Caco-2 (cell line): ENCODE measurements at regions of chr2 and their contacts with region 1.

Region 1: DNA sequence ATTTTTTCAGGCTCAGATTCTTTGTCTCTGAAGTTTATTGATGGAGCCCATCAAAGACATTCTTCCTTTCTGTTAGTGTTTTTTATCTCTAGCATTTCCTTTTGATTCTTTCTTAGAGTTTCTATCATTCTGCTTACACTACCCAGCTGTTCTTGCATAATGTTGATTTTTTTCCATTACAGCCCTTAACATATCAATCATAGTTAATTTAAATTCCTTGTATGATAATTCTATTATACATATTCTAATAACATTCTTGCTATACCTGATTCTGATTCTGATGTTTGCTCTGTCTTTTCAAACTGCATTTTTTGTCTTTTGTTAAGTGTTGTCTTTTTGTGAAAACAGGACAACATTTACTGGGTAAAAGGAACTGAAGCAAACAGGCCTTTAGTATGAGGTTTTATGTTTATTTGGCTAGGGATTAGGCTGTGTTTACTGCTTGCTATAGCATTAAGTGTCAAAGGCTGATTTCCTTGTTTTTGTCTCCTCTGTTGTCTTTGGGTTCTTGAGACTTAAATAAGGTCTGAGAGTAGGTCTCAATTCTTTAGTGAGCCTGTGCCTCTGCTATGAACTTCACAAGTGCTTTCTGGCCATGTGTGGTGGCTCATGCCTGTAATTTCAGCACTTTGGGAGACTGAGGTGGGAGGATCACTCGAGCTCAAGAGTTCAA is 8.0 kb upstream of the STAM2 start:
- DNase-seq: peak in 1 of 2 experiments; percentile 54
- H3K4me3 ChIP-seq: no peak overlapping the region
- H3K4me3 Mint-ChIP-seq: peak overlapping the region; percentile 22
- H3K27ac Mint-ChIP-seq: peak overlapping the region; percentile 84
- H3K4me1 ChIP-seq: peaks cover 18% of the 10 kb centered on the region
- H3K4me1 Mint-ChIP-seq: peaks cover 15% of the 10 kb centered on the region
- H3K27me3 ChIP-seq: no peaks in the 10 kb centered on the region
- H3K27me3 Mint-ChIP-seq: no peaks in the 10 kb centered on the region
- CTCF ChIP-seq: no peak

Region 2: GRCh38 chr2:152200562-152201465 is 17.3 kb after region 1 on chr2:
- CTCF ChIA-PET with region 1: no interaction called
- POLR2A ChIA-PET with region 1: no interaction called
- intact Hi-C with region 1: loop called (anchors 1 kb)
- DNase-seq: peak; percentile 68 to 88
- H3K4me3 ChIP-seq: no peak overlapping the region
- H3K4me3 Mint-ChIP-seq: peak overlapping the region; percentile 45
- H3K27ac Mint-ChIP-seq: peak overlapping the region; percentile 66
- H3K4me1 ChIP-seq: peaks cover 20% of the 10 kb centered on the region; the same call in 1 of the 2 replicates
- H3K4me1 Mint-ChIP-seq: peaks cover 31% of the 10 kb centered on the region
- H3K27me3 ChIP-seq: no peaks in the 10 kb centered on the region
- H3K27me3 Mint-ChIP-seq: no peaks in the 10 kb centered on the region
- CTCF ChIP-seq: no peak

Region 3: DNA sequence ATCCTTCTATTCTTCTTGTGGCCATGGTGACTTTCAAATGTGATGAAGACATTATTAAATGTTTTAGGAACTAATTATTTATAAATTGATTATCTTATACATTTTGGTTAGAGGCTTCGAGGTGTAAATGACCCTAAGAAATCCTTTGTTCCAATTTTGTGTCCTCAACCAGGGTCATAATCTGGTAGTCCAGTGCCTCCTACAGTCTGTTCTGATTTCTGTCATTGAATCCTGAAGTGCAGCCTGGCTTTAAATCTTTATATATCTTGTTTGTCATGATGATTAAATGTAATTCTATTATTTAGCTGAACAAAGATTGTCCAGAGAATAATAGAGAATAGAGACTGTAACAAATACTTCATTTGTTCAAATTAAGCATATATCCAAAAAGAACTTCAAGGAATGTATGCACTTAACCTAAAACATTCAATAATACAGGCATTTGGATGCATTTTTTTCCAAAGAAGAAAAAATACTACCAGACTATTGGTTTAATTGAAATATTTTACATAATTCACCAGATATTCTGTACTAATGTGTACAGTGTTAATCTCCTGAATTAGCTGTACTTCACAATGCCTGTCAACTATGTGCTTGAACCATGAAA is 443.9 kb after region 1 on chr2:
- CTCF ChIA-PET with region 1: interaction called, 10 read pairs
- POLR2A ChIA-PET with region 1: no interaction called
- intact Hi-C with region 1: no loop called
- DNase-seq: peak in 1 of 2 experiments; percentile 19
- H3K4me3 ChIP-seq: no peak overlapping the region
- H3K4me3 Mint-ChIP-seq: no peak overlapping the region
- H3K27ac Mint-ChIP-seq: no peak overlapping the region
- H3K4me1 ChIP-seq: peaks cover 7% of the 10 kb centered on the region
- H3K4me1 Mint-ChIP-seq: peaks cover 10% of the 10 kb centered on the region
- H3K27me3 ChIP-seq: no peaks in the 10 kb centered on the region
- H3K27me3 Mint-ChIP-seq: no peaks in the 10 kb centered on the region
- CTCF ChIP-seq: peak; percentile 50 to 57